ENCODE measurements at regions of chr10 and their contacts with region 1.

Region 1: DNA sequence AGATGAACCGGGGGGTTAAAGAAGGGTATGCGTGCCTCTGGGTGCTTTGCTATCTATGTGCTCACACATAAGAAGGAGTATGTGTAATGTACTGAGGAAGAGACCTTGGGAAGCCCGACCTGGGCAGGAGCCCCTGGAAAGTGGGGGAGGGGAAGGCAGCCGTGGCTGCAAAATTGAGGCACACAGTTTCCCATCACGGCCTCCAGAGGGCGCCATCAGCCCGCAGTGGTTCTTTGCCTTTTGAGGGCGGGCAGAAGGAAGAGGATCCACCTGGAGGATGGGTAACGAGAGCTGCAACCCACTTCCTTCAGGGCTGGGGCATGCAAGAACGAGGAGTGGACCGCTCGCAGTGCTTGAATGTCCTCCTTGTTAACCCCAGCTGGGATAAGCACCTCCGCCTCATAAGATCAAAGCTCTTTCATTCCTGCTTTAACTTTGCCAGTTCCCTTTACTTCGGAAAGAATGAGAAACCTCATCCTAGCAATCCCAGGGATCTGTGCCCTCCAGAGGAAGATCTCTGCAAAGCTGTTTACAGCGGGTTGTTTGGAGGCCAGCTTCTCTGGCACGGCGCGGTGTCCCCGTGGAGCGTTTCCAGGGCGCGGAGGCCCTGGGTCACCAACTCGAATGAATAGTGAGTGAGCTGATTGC is 77.9 kb downstream of the PCGF5 start:
- DNase-seq: peak; percentile 51
- ATAC-seq: peak; percentile 88
- H3K4me3 ChIP-seq: peak overlapping the region in 1 of 3 experiments; percentile 10; a peak in 1 of 6 replicates
- H3K27ac ChIP-seq: no peak overlapping the region
- H3K4me1 ChIP-seq: peaks cover 16% of the 10 kb centered on the region
- H3K27me3 ChIP-seq: no peaks in the 10 kb centered on the region
- CTCF ChIP-seq: peak; percentile 93
- EP300 ChIP-seq: no peak
- POLR2A ChIP-seq: no peak
- RAD21 ChIP-seq: peak; percentile 89

Region 2: DNA sequence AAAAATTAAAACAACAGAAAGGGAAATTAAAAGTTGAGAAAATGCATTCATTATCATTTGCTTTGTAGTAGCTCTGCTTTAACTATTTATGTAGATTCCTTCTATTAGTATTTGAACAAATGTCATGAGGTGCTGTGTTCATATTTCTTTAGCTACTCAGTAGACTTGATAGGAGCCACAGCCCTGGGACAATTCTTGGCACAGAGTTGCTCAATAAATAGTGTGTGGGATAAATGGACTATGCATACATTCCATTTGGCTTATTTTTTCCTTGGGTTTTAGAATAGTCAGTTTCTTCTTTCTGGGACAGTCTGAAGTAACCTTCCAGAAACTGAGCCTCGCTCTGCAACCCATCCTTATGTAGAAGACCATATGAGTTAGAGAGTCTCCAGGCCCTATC is 413.2 kb before region 1 on chr10:
- CTCF ChIA-PET with region 1: interaction called, 3 read pairs
- POLR2A ChIA-PET with region 1: no interaction called
- in situ Hi-C with region 1: no loop called
- intact Hi-C with region 1: loop called (anchors 1 kb)
- DNase-seq: no peak
- ATAC-seq: no peak
- H3K4me3 ChIP-seq: no peak overlapping the region
- H3K27ac ChIP-seq: no peak overlapping the region
- H3K4me1 ChIP-seq: no peaks in the 10 kb centered on the region
- H3K27me3 ChIP-seq: no peaks in the 10 kb centered on the region
- CTCF ChIP-seq: no peak
- EP300 ChIP-seq: no peak
- POLR2A ChIP-seq: no peak
- RAD21 ChIP-seq: no peak

Region 3: DNA sequence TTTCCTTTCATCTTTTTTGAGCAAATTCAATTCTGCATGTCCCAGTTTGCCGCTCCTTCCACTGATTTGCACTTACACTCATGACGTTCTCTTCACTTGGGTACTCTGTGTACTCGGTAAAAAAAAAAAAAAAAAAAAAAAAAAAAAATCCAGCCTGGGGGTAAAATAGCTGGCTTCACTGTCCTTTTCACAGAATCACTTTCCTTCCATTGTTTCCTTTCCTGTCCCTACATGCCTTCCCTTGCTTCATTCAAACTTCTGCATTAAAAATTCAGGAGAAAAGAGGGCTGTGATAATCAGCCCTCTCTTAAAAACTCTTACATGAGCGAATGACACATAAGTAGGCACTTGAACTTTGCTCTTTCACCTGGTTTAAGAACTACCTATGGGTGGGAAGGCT is 386.2 kb before region 1 on chr10:
- CTCF ChIA-PET with region 1: no interaction called
- POLR2A ChIA-PET with region 1: no interaction called
- in situ Hi-C with region 1: no loop called
- intact Hi-C with region 1: loop called (anchors 2 kb)
- DNase-seq: no peak
- ATAC-seq: no peak
- H3K4me3 ChIP-seq: no peak overlapping the region
- H3K27ac ChIP-seq: no peak overlapping the region
- H3K4me1 ChIP-seq: peaks cover 16% of the 10 kb centered on the region
- H3K27me3 ChIP-seq: no peaks in the 10 kb centered on the region
- CTCF ChIP-seq: no peak
- EP300 ChIP-seq: no peak
- POLR2A ChIP-seq: no peak
- RAD21 ChIP-seq: no peak

Region 4: DNA sequence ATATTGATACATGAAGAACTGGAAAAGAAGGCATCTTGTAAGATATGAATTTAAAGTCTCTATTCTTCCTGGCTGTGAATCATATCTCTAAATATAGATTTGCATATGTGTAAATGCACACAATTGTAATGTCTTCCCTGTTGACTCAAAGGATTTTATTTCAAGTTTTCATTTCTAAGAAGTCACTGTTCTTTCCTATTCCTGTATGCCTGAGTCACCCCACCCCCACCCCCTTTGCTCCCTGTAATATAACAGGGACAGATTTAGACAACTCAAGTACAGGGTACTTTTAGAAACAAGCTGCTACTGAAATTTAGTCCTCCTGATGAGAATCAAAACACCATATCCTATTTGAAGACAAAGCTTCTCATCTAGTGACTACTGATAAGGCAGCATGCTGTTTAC is 68.8 kb after region 1 on chr10:
- CTCF ChIA-PET with region 1: interaction called, 7 read pairs
- POLR2A ChIA-PET with region 1: no interaction called
- in situ Hi-C with region 1: loop called (anchors 5 kb)
- intact Hi-C with region 1: loop called (anchors 2 kb)
- DNase-seq: no peak
- ATAC-seq: no peak
- H3K4me3 ChIP-seq: no peak overlapping the region
- H3K27ac ChIP-seq: no peak overlapping the region
- H3K4me1 ChIP-seq: no peaks in the 10 kb centered on the region
- H3K27me3 ChIP-seq: no peaks in the 10 kb centered on the region
- CTCF ChIP-seq: no peak
- EP300 ChIP-seq: no peak
- POLR2A ChIP-seq: no peak
- RAD21 ChIP-seq: no peak

Region 5: DNA sequence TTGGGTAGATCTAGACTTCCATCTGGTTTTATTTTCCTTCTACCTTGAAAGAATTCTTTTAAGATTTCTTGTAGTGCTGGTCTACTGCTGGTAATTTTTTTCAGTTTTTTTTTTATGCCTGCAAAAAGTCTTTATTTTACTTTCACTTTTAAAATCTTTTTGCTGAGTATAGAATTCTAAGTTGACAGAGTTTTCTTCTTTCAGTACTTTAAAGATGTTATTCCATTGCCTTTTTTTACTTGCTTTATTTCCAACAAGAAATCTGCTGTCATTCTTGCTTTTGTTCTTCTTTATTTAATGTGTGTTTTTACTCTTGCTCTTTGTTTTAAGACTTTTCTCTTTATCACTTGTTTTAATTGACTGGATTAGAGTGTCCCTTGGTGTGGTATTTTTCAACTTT is 75.7 kb after region 1 on chr10:
- CTCF ChIA-PET with region 1: interaction called, 7 read pairs
- POLR2A ChIA-PET with region 1: no interaction called
- in situ Hi-C with region 1: loop called (anchors 5 kb)
- intact Hi-C with region 1: loop called (anchors 2 kb)
- DNase-seq: no peak
- ATAC-seq: no peak
- H3K4me3 ChIP-seq: no peak overlapping the region
- H3K27ac ChIP-seq: no peak overlapping the region
- H3K4me1 ChIP-seq: no peaks in the 10 kb centered on the region
- H3K27me3 ChIP-seq: no peaks in the 10 kb centered on the region
- CTCF ChIP-seq: no peak
- EP300 ChIP-seq: no peak
- POLR2A ChIP-seq: no peak
- RAD21 ChIP-seq: no peak

Region 6: DNA sequence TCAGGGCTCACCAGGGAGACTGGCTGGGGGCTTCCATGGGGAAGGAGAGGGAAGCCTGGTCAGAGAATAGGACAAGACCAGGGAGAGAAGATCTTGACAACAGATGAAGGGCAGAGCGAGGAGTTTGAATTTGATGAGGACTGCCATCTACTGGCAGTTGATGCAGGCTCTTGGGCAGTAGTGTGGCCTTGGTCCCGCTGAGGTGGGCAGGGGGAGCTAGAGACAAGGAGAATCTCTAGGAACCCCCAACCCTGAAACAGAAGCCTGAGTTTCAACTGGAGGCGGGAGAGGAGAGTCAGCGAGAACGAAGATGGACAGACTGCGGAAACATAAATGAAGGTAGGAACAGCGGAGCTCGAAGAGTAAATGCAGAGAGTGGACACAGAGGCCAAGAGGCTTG is 253.5 kb after region 1 on chr10:
- CTCF ChIA-PET with region 1: no interaction called
- POLR2A ChIA-PET with region 1: no interaction called
- in situ Hi-C with region 1: loop called (anchors 10 kb)
- intact Hi-C with region 1: no loop called
- DNase-seq: peak; percentile 50
- ATAC-seq: peak; percentile 77
- H3K4me3 ChIP-seq: no peak overlapping the region
- H3K27ac ChIP-seq: no peak overlapping the region
- H3K4me1 ChIP-seq: peaks cover 56% of the 10 kb centered on the region
- H3K27me3 ChIP-seq: no peaks in the 10 kb centered on the region
- CTCF ChIP-seq: peak; percentile 87
- EP300 ChIP-seq: no peak
- POLR2A ChIP-seq: no peak
- RAD21 ChIP-seq: peak; percentile 75